Right cardiac atrium (tissue), 5 donors: ENCODE measurements at regions of chr21 and their contacts with region 1.

Region 1: GRCh38 chr21:45287438-45288391 is at the start of gene POFUT2:
- DNase-seq: peak; percentile 97 to 99 (median 99)
- ATAC-seq: peak; percentile 84 to 91
- H3K4me3 ChIP-seq: peak within 1 kb of the TSS; percentile 93
- H3K27ac ChIP-seq: peak within 1 kb of the TSS; percentile 85
- H3K4me1 ChIP-seq: peaks cover 2% of the 10 kb centered on the region
- H3K27me3 ChIP-seq: no peaks in the 10 kb centered on the region
- total RNA-seq, gene POFUT2: 16.0 to 20.3 (median 19.1) TPM

Region 2: DNA sequence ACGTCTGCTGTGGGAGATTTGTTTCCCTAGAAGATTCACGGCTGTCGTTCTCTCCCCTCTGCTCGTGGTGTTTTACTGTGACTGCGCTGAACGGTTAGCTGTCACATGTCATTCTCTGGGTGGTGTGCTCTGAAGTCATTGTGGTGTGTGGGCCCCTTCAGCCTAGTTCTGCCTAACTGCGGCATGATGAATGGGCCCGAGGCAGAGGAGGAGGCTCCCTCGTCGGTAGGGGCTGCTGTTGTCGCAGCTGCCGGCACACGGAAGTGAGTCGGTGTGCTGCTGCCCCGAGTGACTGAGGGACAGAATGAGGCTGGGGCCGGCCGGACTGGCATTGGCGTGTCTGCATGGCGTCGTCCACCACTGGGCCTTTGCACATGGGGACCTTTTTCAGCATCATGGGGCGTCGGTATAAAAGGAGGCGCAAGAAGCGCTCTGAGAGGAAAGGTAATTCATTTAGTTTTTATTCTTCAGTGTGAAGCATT is 135.4 kb before region 1 on chr21:
- intact Hi-C with region 1: loop called in 1 of 4 experiments (anchors 10 kb)
- DNase-seq: peak; percentile 44 to 71 (median 65)
- ATAC-seq: peak; percentile 35 to 50
- H3K4me3 ChIP-seq: no peak overlapping the region
- H3K27ac ChIP-seq: no peak overlapping the region
- H3K4me1 ChIP-seq: no peaks in the 10 kb centered on the region
- H3K27me3 ChIP-seq: no peaks in the 10 kb centered on the region

Region 3: GRCh38 chr21:45248893-45249381 is 38.8 kb before region 1 on chr21:
- intact Hi-C with region 1: no loop called
- DNase-seq: peak; percentile 46 to 77 (median 77)
- ATAC-seq: peak; percentile 62 to 80
- H3K4me3 ChIP-seq: no peak overlapping the region
- H3K27ac ChIP-seq: no peak overlapping the region
- H3K4me1 ChIP-seq: no peaks in the 10 kb centered on the region
- H3K27me3 ChIP-seq: no peaks in the 10 kb centered on the region

Region 4: DNA sequence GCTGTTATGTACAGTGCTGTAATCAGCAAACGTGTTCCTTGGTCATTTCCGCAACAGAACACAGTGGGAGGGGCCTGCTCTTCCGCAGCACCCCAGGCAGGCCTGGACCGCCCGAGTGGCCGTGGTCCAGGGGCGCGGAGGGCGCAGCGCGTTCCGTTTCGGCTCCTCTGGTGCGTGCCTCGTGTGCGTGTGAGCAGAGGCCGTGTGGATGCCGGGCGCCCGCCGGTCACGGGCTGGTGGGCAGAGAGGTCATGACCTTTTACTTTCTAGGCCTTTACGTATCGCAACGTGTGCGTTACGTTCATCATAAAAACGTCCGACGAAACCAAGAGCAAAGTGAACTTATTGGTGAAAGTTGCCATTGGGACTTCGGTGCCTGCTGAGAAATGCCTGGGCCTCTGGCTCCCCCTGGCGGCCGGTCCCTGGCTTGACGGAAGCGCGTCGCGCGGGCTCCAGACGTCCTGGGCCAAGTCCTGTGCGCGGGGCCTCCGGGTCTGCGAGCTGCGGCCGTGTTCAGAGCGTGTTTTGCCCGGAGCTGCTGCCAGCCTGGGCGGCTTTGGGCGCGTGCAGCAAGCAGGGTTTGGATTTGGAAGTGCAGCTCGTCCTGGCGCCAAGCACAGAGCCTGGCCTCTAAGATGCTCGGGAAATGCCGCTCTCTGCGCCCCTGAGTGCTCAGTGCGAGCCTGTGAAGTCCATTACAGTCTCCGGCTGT is 151.6 kb after region 1 on chr21:
- intact Hi-C with region 1: loop called (anchors 2 to 5 kb)
- DNase-seq: peak; percentile 85 to 95 (median 94)
- ATAC-seq: peak; percentile 86 to 87
- H3K4me3 ChIP-seq: peak overlapping the region; percentile 7
- H3K27ac ChIP-seq: peak overlapping the region; percentile 18
- H3K4me1 ChIP-seq: peaks cover 2% of the 10 kb centered on the region
- H3K27me3 ChIP-seq: no peaks in the 10 kb centered on the region

Region 5: GRCh38 chr21:45596704-45597318 is 309.1 kb after region 1 on chr21:
- intact Hi-C with region 1: loop called in 1 of 4 experiments (anchors 10 kb)
- DNase-seq: peak; percentile 75 to 90 (median 86)
- ATAC-seq: peak; percentile 72 to 82
- H3K4me3 ChIP-seq: no peak overlapping the region
- H3K27ac ChIP-seq: no peak overlapping the region
- H3K4me1 ChIP-seq: no peaks in the 10 kb centered on the region
- H3K27me3 ChIP-seq: no peaks in the 10 kb centered on the region